Activated B cell treated with CpG ODN at 0.5 μM for 24 hours (primary cell): ENCODE measurements at regions of chr18 and their contacts with region 1.

Region 1: DNA sequence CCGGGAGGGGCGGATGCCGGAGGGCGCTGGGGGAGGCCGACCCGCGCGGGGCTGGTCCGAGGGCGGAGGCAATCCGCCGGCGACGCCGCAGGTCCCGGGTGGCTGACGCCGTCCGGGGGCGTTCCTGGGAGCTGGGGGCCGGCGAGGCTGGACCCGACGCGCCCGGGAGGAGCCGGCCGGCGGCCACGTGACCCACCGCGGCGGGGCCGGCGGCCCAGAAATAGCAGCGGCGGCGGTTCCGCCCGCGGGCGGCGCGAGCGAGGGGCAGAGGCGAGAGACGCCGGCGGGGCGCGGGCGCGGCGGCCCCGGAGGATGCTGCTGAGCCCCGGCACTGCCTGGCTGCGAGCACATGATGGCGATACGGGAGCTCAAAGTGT is at the start of gene RAB31:
- DNase-seq: peak; percentile 61
- ATAC-seq: peak; percentile 47
- H3K4me3 Mint-ChIP-seq: peak within 1 kb of the TSS; percentile 96
- H3K27ac Mint-ChIP-seq: peak within 1 kb of the TSS; percentile 95
- H3K4me1 Mint-ChIP-seq: peaks cover 54% of the 10 kb centered on the region
- H3K27me3 Mint-ChIP-seq: peaks cover 2% of the 10 kb centered on the region
- CTCF ChIP-seq: no peak
- total RNA-seq, gene RAB31: 33.0 and 36.0 TPM in 2 replicates

Region 2: GRCh38 chr18:8601277-8602032 is 1106.6 kb before region 1 on chr18:
- CTCF ChIA-PET with region 1: no interaction called
- POLR2A ChIA-PET with region 1: no interaction called
- intact Hi-C with region 1: loop called (anchors 5 kb)
- DNase-seq: no peak
- ATAC-seq: peak; percentile 75
- H3K4me3 Mint-ChIP-seq: peak overlapping the region; percentile 40
- H3K27ac Mint-ChIP-seq: peak overlapping the region; percentile 87
- H3K4me1 Mint-ChIP-seq: peaks cover 57% of the 10 kb centered on the region
- H3K27me3 Mint-ChIP-seq: no peaks in the 10 kb centered on the region
- CTCF ChIP-seq: no peak

Region 3: GRCh38 chr18:9563331-9563730 is 144.7 kb before region 1 on chr18:
- CTCF ChIA-PET with region 1: no interaction called
- POLR2A ChIA-PET with region 1: no interaction called
- intact Hi-C with region 1: no loop called
- DNase-seq: no peak
- ATAC-seq: no peak
- H3K4me3 Mint-ChIP-seq: no peak overlapping the region
- H3K27ac Mint-ChIP-seq: no peak overlapping the region
- H3K4me1 Mint-ChIP-seq: no peaks in the 10 kb centered on the region
- H3K27me3 Mint-ChIP-seq: no peaks in the 10 kb centered on the region
- CTCF ChIP-seq: no peak

Region 4: DNA sequence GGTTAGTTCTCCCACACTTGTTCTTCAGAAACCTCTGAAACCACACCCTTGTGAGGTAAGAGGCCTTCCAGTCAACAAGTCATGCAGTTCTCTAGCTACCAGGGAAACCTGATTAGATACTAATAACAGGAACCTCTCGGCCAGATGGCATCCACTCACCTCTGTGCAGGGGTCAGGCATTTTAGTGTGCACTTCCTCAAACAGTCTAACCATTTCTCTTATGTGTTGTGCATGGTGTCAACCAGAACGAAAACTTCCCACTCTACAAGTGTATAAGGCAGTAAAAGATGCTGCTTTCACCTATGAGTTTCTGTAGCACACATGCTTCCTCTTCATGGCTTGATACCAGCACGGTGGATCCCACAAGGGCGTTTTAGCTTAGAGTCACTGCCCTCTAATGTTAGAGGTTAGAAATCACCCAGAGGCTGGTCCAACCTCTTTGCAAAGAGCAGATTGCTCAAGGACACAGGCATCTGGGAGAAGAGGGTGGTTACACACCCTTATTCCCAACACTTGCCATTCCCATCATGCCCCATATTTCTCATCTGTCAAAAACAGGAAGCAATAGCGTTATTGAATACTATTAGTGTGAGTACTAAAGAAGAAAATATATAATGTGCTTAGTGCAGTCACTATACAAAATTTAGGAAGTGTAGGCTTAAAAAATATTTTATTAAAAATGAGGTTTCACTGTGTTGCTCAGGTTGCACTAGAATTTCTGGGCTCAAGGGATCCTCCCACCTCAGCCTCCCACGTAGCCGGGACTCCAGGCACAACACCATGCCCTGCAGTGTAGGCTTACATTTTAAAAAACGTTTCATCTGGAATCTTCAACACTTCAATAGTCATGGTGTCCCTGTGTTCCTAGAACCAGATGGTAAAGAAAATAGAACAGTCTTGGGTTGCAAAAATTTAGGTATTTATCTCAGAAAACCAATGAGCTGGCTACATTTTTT is 34.5 kb before region 1 on chr18:
- CTCF ChIA-PET with region 1: interaction called, 3 read pairs
- POLR2A ChIA-PET with region 1: interaction called, 26 read pairs
- intact Hi-C with region 1: loop called (anchors 1 kb)
- DNase-seq: peak; percentile 25
- ATAC-seq: peak; percentile 95
- H3K4me3 Mint-ChIP-seq: peak overlapping the region; percentile 35
- H3K27ac Mint-ChIP-seq: peak overlapping the region; percentile 93
- H3K4me1 Mint-ChIP-seq: peaks cover 15% of the 10 kb centered on the region
- H3K27me3 Mint-ChIP-seq: no peaks in the 10 kb centered on the region
- CTCF ChIP-seq: no peak

Region 5: GRCh38 chr18:9722691-9723090 is 14.6 kb after region 1 on chr18:
- CTCF ChIA-PET with region 1: interaction called, 3 read pairs
- POLR2A ChIA-PET with region 1: interaction called, 3 read pairs
- intact Hi-C with region 1: loop called (anchors 2 kb)
- DNase-seq: no peak
- ATAC-seq: no peak
- H3K4me3 Mint-ChIP-seq: no peak overlapping the region
- H3K27ac Mint-ChIP-seq: no peak overlapping the region
- H3K4me1 Mint-ChIP-seq: no peaks in the 10 kb centered on the region
- H3K27me3 Mint-ChIP-seq: no peaks in the 10 kb centered on the region
- CTCF ChIP-seq: no peak

Region 6: DNA sequence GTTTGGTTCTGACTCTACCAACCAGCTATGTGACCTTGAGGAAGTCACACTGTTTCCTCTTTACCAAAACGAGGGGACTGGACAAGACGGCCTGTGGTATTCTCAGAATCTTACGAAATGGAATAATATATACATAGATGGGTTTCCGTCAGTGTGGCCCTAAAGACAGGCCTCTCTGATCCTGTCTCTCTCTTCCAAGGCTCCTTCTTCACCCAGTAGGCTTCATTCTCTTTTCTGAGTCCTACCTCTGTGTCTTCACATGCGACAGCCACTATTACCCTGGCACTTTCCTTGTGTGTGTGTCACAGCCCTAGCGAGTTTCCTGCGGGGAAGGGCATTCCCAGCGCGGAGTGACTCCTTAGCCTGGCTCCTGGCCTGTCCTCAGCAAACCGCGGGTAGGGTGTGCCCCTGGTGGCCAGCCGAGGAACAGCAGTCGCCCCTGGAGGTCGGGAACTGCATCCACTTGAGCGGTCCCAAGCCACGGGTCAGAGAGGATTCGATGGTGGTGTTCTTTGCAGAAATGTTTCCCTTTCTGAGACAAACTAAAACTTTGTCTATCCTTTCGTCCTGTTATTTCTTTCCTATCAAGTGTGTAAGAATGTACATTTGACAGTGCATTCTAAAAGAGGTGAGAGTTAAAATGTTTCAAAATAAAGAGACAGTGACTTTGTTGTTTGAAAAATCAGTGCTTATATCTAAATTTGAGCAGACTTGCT is 63.4 kb after region 1 on chr18:
- CTCF ChIA-PET with region 1: interaction called, 5 read pairs
- POLR2A ChIA-PET with region 1: no interaction called
- intact Hi-C with region 1: loop called (anchors 1 kb)
- DNase-seq: peak; percentile 66
- ATAC-seq: peak; percentile 95
- H3K4me3 Mint-ChIP-seq: peak overlapping the region; percentile 13
- H3K27ac Mint-ChIP-seq: no peak overlapping the region
- H3K4me1 Mint-ChIP-seq: peaks cover 28% of the 10 kb centered on the region
- H3K27me3 Mint-ChIP-seq: no peaks in the 10 kb centered on the region
- CTCF ChIP-seq: peak; percentile 95

Region 7: GRCh38 chr18:9876867-9877654 is 169.0 kb after region 1 on chr18:
- CTCF ChIA-PET with region 1: no interaction called
- POLR2A ChIA-PET with region 1: no interaction called
- intact Hi-C with region 1: no loop called
- DNase-seq: no peak
- ATAC-seq: no peak
- H3K4me3 Mint-ChIP-seq: no peak overlapping the region
- H3K27ac Mint-ChIP-seq: no peak overlapping the region
- H3K4me1 Mint-ChIP-seq: no peaks in the 10 kb centered on the region
- H3K27me3 Mint-ChIP-seq: peaks cover 14% of the 10 kb centered on the region
- CTCF ChIP-seq: no peak

Region 8: GRCh38 chr18:10525371-10526210 is 817.5 kb after region 1 on chr18 and contains the start of gene NAPG:
- CTCF ChIA-PET with region 1: no interaction called
- POLR2A ChIA-PET with region 1: no interaction called
- intact Hi-C with region 1: loop called (anchors 5 kb)
- DNase-seq: peak; percentile 86
- ATAC-seq: peak; percentile 91
- H3K4me3 Mint-ChIP-seq: peak within 1 kb of the TSS; percentile 99
- H3K27ac Mint-ChIP-seq: peak within 1 kb of the TSS; percentile 96
- H3K4me1 Mint-ChIP-seq: peaks cover 49% of the 10 kb centered on the region
- H3K27me3 Mint-ChIP-seq: no peaks in the 10 kb centered on the region
- CTCF ChIP-seq: no peak
- total RNA-seq, gene NAPG: 24.5 and 33.3 TPM in 2 replicates